Activated CD4-positive, alpha-beta memory T cell treated with anti-CD3 and anti-CD28 coated beads for 36 hours (primary cell): ENCODE measurements at regions of chr7 and their contacts with region 1.

Region 1: DNA sequence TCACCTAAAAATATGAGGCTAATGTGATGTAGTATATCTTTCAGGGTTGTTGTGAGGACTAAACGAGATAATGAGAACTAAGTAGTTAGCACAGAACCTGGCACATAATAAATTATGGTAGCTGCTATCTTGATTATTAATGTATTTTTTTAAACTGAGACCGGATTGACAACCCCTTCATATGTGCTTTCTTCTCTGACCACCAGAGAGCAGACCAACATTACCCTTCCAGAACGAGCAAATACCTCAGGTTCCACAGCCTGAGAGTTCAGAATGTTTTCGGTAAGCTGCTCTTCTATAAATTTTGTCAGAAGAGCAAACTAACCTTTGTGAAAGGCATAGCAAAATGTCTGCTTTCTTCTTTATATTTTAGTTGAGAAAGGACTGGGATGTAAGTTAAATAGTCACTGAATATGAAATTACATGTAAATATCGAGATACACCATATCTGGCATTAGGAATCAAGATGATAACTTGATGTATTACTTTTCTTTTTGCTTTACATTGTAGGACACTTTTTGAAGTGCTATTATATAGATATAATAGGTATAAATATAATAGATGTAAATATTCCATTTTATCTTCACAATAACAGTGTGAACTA is 13.6 kb upstream of the BPGM start:
- DNase-seq: peak; percentile 29
- H3K4me3 Mint-ChIP-seq: no peak overlapping the region
- H3K27ac Mint-ChIP-seq: no peak overlapping the region
- H3K4me1 Mint-ChIP-seq: peaks cover 23% of the 10 kb centered on the region
- H3K27me3 Mint-ChIP-seq: peaks cover 13% of the 10 kb centered on the region

Region 2: GRCh38 chr7:134044682-134045081 is 588.4 kb before region 1 on chr7:
- CTCF ChIA-PET with region 1: no interaction called
- POLR2A ChIA-PET with region 1: no interaction called
- intact Hi-C with region 1: no loop called
- DNase-seq: no peak
- H3K4me3 Mint-ChIP-seq: no peak overlapping the region
- H3K27ac Mint-ChIP-seq: no peak overlapping the region
- H3K4me1 Mint-ChIP-seq: no peaks in the 10 kb centered on the region
- H3K27me3 Mint-ChIP-seq: no peaks in the 10 kb centered on the region

Region 3: GRCh38 chr7:134619627-134620331 is 13.3 kb before region 1 on chr7:
- CTCF ChIA-PET with region 1: interaction called, 23 read pairs
- POLR2A ChIA-PET with region 1: no interaction called
- intact Hi-C with region 1: no loop called
- DNase-seq: no peak
- H3K4me3 Mint-ChIP-seq: no peak overlapping the region
- H3K27ac Mint-ChIP-seq: no peak overlapping the region
- H3K4me1 Mint-ChIP-seq: no peaks in the 10 kb centered on the region
- H3K27me3 Mint-ChIP-seq: peaks cover 39% of the 10 kb centered on the region

Region 4: GRCh38 chr7:134701272-134701671 is 68.2 kb after region 1 on chr7:
- CTCF ChIA-PET with region 1: interaction called, 60 read pairs
- POLR2A ChIA-PET with region 1: no interaction called
- intact Hi-C with region 1: loop called (anchors 1 kb)
- DNase-seq: no peak
- H3K4me3 Mint-ChIP-seq: no peak overlapping the region
- H3K27ac Mint-ChIP-seq: no peak overlapping the region
- H3K4me1 Mint-ChIP-seq: no peaks in the 10 kb centered on the region
- H3K27me3 Mint-ChIP-seq: no peaks in the 10 kb centered on the region

Region 5: DNA sequence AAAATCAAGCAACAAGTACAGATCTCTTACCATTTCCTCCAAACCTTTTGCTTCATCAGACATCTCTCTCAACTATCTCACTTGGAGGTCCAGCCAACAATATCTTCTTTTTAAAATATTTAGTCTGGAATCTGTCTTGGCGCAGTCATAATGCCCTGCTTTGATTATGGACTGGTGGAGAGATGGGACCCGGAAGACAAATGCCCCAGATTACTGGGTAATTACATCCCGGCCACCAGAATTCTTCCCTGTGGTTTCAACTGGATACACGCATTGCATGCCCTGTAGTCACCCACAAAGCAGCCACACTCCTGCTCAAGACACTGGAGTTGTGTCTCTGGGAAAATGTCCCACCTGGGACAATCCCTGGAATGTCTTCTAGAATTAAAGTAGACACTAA is 79.2 kb after region 1 on chr7:
- CTCF ChIA-PET with region 1: no interaction called
- POLR2A ChIA-PET with region 1: no interaction called
- intact Hi-C with region 1: no loop called
- DNase-seq: no peak
- H3K4me3 Mint-ChIP-seq: peak overlapping the region; percentile 39
- H3K27ac Mint-ChIP-seq: no peak overlapping the region
- H3K4me1 Mint-ChIP-seq: peaks cover 30% of the 10 kb centered on the region
- H3K27me3 Mint-ChIP-seq: no peaks in the 10 kb centered on the region

Region 6: GRCh38 chr7:134865001-134865845 is 232.2 kb after region 1 on chr7:
- CTCF ChIA-PET with region 1: no interaction called
- POLR2A ChIA-PET with region 1: no interaction called
- intact Hi-C with region 1: loop called (anchors 10 kb)
- DNase-seq: peak; percentile 56
- H3K4me3 Mint-ChIP-seq: peak overlapping the region; percentile 50
- H3K27ac Mint-ChIP-seq: peak overlapping the region; percentile 61
- H3K4me1 Mint-ChIP-seq: peaks cover 18% of the 10 kb centered on the region
- H3K27me3 Mint-ChIP-seq: no peaks in the 10 kb centered on the region

Region 7: DNA sequence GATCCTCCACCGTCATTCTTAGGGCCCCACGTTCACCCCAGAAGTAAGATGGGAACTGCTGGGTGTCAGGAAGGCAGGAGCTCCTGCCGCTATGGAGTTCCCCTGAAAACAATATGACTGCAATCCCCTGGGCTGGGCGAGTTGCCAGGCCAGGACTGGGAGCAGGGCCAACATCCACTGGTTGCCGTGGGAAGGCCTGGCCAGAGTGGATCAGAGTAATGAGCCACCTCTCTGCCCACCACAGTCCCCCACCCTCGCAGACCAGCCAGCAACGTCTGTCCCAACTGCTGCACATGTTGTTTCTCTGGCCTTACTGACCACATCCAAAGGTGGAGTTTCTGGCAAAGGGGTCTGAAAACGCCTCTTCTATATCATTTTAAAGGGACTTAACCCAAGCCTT is 687.2 kb after region 1 on chr7:
- CTCF ChIA-PET with region 1: no interaction called
- POLR2A ChIA-PET with region 1: no interaction called
- intact Hi-C with region 1: no loop called
- DNase-seq: no peak
- H3K4me3 Mint-ChIP-seq: no peak overlapping the region
- H3K27ac Mint-ChIP-seq: no peak overlapping the region
- H3K4me1 Mint-ChIP-seq: no peaks in the 10 kb centered on the region
- H3K27me3 Mint-ChIP-seq: no peaks in the 10 kb centered on the region